Psoas muscle (tissue), 8 donors: ENCODE measurements at regions of chrX and their contacts with region 1.

Region 1: GRCh38 chrX:96764864-96765263 is 80.2 kb downstream of the DIAPH2 start:
- DNase-seq: no peak
- ATAC-seq: no peak
- H3K4me3 ChIP-seq: no peak overlapping the region
- H3K27ac ChIP-seq: no peak overlapping the region
- H3K4me1 ChIP-seq: no peaks in the 10 kb centered on the region
- H3K27me3 ChIP-seq: no peaks in the 10 kb centered on the region
- CTCF ChIP-seq: no peak

Region 2: GRCh38 chrX:96372313-96373046 is 392.4 kb before region 1 on chrX:
- intact Hi-C with region 1: loop called in 1 of 2 experiments (anchors 10 kb)
- DNase-seq: no peak
- ATAC-seq: peak in 2 of 4 donors; percentile 43 to 72
- H3K4me3 ChIP-seq: no peak overlapping the region
- H3K27ac ChIP-seq: no peak overlapping the region
- H3K4me1 ChIP-seq: no peaks in the 10 kb centered on the region
- H3K27me3 ChIP-seq: peaks cover 0 to 9% (median 0%) of the 10 kb centered on the region in 3 donors
- CTCF ChIP-seq: peak; percentile 64